Activated CD4-positive, alpha-beta T cell treated with anti-CD3 and anti-CD28 coated beads for 36 hours (primary cell): ENCODE measurements at regions of chr14 and their contacts with region 1.

Region 1: DNA sequence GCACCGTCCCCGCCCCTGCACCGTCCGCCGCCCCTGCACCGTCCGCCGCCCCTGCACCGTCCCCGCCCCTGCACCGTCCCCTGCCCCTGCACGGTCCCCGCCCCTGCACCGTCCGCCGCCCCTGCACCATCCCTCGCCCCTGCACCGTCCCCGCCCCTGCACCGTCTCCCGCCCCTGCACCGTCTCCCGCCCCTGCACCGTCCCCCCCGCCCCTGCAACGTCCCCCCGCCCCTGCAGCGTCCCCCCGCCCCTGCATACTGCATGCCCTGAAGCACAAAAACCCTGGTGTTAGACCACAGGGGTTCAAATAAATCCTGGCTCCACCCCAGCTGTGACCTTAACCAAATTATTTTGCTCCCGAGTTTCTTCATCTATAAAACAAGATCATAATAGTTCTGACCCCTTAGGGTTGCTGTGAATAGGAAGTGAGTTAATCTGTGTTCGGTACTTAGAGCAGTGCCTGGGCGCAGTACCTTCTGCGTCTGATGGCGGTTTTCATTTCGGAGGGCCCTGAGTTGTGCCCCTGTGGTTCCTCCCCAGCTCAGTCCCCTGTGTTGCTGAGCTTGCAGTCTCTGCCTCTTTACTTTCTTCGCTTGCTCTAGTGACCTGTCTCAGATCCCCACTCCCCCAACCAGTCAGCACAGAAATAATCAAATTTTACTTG is 38.2 kb downstream of the ESRRB start:
- DNase-seq: no peak
- ATAC-seq: no peak
- H3K4me3 Mint-ChIP-seq: no peak overlapping the region
- H3K27ac Mint-ChIP-seq: no peak overlapping the region
- H3K4me1 Mint-ChIP-seq: peaks cover 3% of the 10 kb centered on the region
- H3K27me3 Mint-ChIP-seq: peaks cover 31% of the 10 kb centered on the region

Region 2: GRCh38 chr14:76371066-76371465 is 43.0 kb before region 1 on chr14:
- CTCF ChIA-PET with region 1: no interaction called
- POLR2A ChIA-PET with region 1: interaction called, 11 read pairs
- intact Hi-C with region 1: no loop called
- DNase-seq: no peak
- ATAC-seq: no peak
- H3K4me3 Mint-ChIP-seq: no peak overlapping the region
- H3K27ac Mint-ChIP-seq: no peak overlapping the region
- H3K4me1 Mint-ChIP-seq: no peaks in the 10 kb centered on the region
- H3K27me3 Mint-ChIP-seq: peaks cover 20% of the 10 kb centered on the region

Region 3: DNA sequence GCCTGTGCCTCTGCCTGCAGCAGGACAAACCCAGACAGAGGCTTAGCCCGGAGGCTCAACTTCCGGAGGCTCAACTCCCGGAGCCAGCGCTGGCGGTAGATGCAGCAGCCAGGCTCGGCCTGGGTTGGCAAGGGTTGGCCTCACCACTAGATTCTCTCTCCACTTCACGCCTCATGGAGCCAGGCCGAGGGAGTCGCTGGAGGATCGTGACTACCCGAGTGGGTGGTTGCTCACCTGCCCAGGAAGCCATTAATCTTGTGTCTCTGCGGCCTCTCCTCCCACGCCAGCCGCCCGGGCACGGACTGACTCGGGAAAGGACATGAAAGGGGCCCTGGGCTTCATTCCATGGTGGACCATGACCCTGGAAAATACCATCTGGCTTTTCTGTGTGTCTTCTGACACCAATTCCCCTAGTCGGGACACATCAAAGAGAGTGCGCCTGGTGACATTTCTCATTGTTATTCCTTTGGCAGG is 17.3 kb before region 1 on chr14:
- CTCF ChIA-PET with region 1: no interaction called
- POLR2A ChIA-PET with region 1: no interaction called
- intact Hi-C with region 1: no loop called
- DNase-seq: no peak
- ATAC-seq: no peak
- H3K4me3 Mint-ChIP-seq: no peak overlapping the region
- H3K27ac Mint-ChIP-seq: no peak overlapping the region
- H3K4me1 Mint-ChIP-seq: no peaks in the 10 kb centered on the region
- H3K27me3 Mint-ChIP-seq: peaks cover 2% of the 10 kb centered on the region